Colonic mucosa (tissue), 4 donors: ENCODE measurements at regions of chr22 and their contacts with region 1.

Region 1: DNA sequence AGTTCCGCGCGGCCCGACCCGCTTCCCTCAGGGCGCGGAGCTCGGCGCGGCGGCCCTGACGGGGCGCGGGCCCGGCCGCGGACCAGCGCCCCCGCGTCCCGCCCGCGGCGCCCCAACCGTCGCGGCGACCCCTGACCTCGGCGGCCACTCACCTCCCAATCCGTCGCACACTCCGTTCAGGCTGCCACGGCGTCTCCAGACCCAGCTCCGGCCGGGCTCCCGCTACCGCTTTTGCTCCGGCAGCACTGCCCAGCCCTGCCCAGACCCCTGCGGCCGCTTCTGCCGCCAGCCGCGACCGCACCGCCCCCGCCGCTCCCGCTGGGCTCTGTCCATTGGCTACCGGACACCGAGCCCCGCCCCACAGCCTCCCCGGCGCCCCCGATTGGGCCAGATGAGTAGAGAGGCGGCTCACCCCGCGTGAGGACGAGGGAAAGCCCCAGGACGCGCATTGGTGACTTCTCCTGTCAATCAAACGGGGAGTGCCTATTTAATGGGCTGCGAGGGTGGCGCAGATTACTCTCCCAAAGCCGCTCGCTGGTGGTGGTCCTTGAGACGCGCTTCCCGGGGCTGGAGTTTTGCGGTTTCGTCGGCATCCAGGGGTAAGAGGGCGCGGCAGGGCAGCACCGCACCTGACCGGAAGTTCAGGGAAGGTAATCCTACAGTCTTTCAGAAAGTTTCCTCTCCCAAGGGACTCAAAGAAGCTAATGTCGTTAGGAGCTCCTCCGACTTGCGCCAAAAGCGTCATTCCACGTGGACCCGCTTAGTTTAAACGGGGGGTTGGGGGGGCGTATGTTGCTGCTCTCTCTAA is at the start of gene PACSIN2:
- DNase-seq: peak; percentile 100
- H3K4me3 ChIP-seq: peak within 1 kb of the TSS; percentile 71
- H3K27ac ChIP-seq: peak within 1 kb of the TSS; percentile 73
- H3K4me1 ChIP-seq: peaks cover 9% of the 10 kb centered on the region
- H3K27me3 ChIP-seq: no peaks in the 10 kb centered on the region
- CTCF ChIP-seq: no peak
- total RNA-seq, gene PACSIN2: 143 to 160 TPM

Region 2: GRCh38 chr22:42933481-42934091 is 81.5 kb before region 1 on chr22:
- intact Hi-C with region 1: loop called (anchors 10 kb)
- DNase-seq: no peak
- H3K4me3 ChIP-seq: no peak overlapping the region
- H3K27ac ChIP-seq: peak overlapping the region; percentile 65
- H3K4me1 ChIP-seq: peaks cover 24% of the 10 kb centered on the region
- H3K27me3 ChIP-seq: no peaks in the 10 kb centered on the region
- CTCF ChIP-seq: no peak

Region 3: DNA sequence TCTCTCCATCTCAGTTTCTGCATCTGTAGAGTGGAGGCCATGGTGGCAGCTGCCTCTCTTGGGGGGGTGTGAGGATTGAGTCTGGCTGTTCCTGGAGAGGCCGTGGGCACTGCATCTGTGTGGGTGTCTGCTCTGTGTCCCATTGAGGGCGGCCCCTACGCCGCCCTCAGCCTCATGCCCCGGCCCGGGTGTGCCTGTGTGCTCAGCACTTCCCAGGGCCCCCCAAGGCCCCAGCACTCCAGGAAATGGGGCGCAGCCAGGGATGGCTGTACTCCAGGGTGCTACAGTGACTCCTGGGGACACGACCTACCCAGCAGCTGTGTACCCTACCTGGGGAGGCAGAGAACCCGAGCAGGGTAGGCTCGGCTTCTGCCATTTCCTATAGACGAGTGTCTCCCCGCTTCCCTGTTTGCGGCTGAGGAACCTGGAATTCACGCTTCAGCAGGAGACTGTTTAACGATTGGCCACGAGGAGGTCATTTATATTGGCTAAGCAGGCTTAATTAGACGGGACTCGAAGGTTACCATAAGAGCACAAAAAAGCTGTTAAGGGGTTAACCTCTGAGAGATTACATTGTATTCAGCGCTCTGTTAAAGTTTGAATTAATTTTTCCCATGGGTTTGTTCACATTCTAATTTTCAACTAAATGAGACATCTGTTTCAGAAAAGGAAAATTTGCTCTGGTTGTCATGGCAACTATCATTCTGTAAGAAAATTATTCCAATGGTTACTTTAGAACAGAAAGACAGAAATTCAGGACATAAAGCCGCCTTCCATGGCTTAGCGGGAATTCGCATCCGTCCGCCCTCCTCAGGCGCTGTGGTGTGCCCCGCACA is 473.2 kb after region 1 on chr22:
- intact Hi-C with region 1: no loop called
- DNase-seq: no peak
- H3K4me3 ChIP-seq: no peak overlapping the region
- H3K27ac ChIP-seq: no peak overlapping the region
- H3K4me1 ChIP-seq: no peaks in the 10 kb centered on the region
- H3K27me3 ChIP-seq: no peaks in the 10 kb centered on the region
- CTCF ChIP-seq: no peak